Activated naive CD8-positive, alpha-beta T cell treated with anti-CD3 and anti-CD28 coated beads, Interleukin-2, amount 10 ng/mL, durations not matched to agents 7 days and 5 days (primary cell): ENCODE measurements at regions of chr6 and their contacts with region 1.

Region 1: GRCh38 chr6:110873981-110874879 is at the start of gene AMD1:
- DNase-seq: peak; percentile 91
- ATAC-seq: peak; percentile 75
- H3K4me3 Mint-ChIP-seq: peak within 1 kb of the TSS; percentile 93
- H3K27ac Mint-ChIP-seq: peak within 1 kb of the TSS; percentile 97
- H3K4me1 Mint-ChIP-seq: peaks cover 18% of the 10 kb centered on the region
- H3K27me3 Mint-ChIP-seq: no peaks in the 10 kb centered on the region
- total RNA-seq, gene AMD1: 60.0 to 61.2 TPM

Region 2: DNA sequence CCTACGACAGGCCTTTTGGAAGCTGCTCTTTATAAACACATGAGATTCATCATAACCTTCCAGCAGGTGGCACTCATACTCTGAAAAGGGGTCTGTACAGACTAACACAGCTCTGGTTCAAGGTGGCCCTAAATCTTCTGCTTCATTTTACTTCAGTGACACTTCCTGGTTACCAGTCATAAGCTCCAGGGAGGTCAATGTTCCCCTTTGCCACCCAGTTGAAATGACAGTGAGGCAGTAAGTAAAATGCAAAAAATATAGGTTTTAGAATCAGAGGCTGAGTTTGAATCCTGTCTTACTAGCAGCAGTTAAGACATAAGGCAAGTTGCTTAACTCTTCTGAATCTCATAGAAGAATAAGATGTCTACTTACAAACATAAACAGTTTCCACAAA is 191.8 kb before region 1 on chr6:
- POLR2A ChIA-PET with region 1: interaction called, 22 read pairs
- DNase-seq: no peak
- ATAC-seq: peak; percentile 99
- H3K4me3 Mint-ChIP-seq: no peak overlapping the region
- H3K27ac Mint-ChIP-seq: peak overlapping the region; percentile 27
- H3K4me1 Mint-ChIP-seq: peaks cover 9% of the 10 kb centered on the region
- H3K27me3 Mint-ChIP-seq: no peaks in the 10 kb centered on the region

Region 3: DNA sequence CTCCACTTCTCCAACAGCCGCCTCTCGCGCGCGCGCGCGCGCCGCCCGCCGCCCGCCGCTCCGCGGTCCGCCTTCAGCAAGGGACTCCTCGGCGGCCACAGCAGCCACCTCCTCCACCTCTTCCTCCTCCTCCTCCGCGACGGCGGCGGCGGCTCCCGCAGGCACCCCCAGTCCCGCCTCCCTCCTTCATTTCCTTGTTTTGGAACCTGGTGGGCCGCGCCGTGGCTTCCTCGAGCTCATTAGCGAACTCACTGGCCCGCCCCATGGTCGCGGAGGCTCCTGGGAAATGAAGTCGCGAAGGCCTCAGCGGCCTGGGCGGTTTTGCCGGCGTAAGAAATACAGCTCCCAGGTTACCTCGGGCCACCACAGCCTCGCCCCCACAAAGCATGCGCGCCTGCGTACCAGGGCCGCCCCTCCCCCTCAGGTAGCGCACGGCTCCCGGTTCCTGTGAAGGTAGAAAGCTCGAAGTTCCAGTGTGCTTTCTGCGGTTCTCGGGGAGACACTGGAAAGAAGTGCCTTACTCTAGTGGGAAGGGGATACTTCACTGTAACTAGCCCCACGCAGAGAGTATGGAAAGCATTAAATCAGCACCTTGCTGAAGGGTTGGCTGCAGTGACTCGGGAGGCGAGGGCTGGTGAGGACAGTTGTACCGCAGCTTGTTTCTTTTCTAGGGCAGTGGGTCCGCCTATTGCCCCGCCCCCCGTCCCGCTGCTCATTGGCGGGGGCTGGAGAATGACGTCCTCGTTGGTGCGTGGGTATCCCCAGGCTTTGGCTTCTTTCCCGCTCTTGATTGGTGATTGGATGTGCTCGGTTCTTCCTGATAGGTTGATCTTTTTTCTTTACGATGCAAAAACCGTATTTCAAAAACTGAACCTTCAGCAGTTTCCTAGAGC is 58.8 kb before region 1 on chr6 and contains the start of gene CDK19:
- POLR2A ChIA-PET with region 1: interaction called, 462 read pairs
- DNase-seq: peak; percentile 96
- ATAC-seq: peak; percentile 84
- H3K4me3 Mint-ChIP-seq: peak within 1 kb of the TSS; percentile 100
- H3K27ac Mint-ChIP-seq: peak within 1 kb of the TSS; percentile 100
- H3K4me1 Mint-ChIP-seq: peaks cover 32% of the 10 kb centered on the region
- H3K27me3 Mint-ChIP-seq: no peaks in the 10 kb centered on the region
- total RNA-seq, gene CDK19: 25.3 to 30.0 TPM

Region 4: GRCh38 chr6:110958329-110959192 is 84.3 kb after region 1 on chr6 and contains the start of gene GTF3C6:
- POLR2A ChIA-PET with region 1: interaction called, 71 read pairs
- DNase-seq: peak; percentile 93
- ATAC-seq: peak; percentile 99
- H3K4me3 Mint-ChIP-seq: peak within 1 kb of the TSS; percentile 96
- H3K27ac Mint-ChIP-seq: peak within 1 kb of the TSS; percentile 98
- H3K4me1 Mint-ChIP-seq: peaks cover 10% of the 10 kb centered on the region
- H3K27me3 Mint-ChIP-seq: peaks cover 4% of the 10 kb centered on the region
- total RNA-seq, gene GTF3C6: 60.9 to 65.4 TPM

Region 5: GRCh38 chr6:110990840-110991576 is 116.8 kb after region 1 on chr6:
- POLR2A ChIA-PET with region 1: no interaction called
- DNase-seq: no peak
- ATAC-seq: no peak
- H3K4me3 Mint-ChIP-seq: no peak overlapping the region
- H3K27ac Mint-ChIP-seq: no peak overlapping the region
- H3K4me1 Mint-ChIP-seq: peaks cover 4% of the 10 kb centered on the region
- H3K27me3 Mint-ChIP-seq: no peaks in the 10 kb centered on the region

Region 6: DNA sequence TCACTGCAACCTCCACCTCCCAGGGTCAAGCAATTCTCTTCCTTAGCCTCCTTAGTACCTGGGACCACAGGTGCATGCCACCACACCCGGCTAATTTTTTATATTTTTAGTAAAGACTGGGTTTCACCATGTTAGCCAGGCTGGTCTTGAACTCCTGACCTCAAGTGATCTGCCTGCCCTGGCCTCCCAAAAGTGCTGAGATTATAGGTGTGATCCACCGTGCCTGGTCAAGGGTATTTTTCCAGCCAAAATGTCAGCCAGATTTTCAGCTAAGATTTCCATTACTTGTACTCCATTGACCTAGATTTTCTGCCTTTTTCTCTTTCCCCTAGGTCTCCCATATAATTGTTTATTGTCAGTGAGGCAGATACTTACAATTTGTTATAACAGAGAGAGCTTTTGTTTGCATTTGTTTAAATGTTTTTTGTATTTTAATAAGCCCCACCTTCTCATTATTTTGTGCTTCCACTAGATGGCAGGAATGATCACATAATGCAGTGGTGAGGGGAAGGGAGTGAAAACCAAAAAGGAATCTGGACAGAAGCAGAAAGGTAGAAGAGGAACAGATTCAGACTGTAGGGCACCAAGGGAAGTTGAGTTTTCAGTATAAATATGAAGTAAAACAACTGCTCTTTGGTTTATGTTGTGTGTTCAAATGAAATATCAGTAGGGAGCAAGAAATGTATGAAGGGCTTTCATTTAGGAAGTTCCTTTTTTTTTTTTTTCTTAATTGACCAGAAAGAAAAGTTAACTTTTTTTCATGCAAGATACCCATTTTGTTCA is 137.3 kb after region 1 on chr6:
- POLR2A ChIA-PET with region 1: no interaction called
- DNase-seq: no peak
- ATAC-seq: peak; percentile 75
- H3K4me3 Mint-ChIP-seq: no peak overlapping the region
- H3K27ac Mint-ChIP-seq: no peak overlapping the region
- H3K4me1 Mint-ChIP-seq: peaks cover 8% of the 10 kb centered on the region
- H3K27me3 Mint-ChIP-seq: no peaks in the 10 kb centered on the region

Region 7: DNA sequence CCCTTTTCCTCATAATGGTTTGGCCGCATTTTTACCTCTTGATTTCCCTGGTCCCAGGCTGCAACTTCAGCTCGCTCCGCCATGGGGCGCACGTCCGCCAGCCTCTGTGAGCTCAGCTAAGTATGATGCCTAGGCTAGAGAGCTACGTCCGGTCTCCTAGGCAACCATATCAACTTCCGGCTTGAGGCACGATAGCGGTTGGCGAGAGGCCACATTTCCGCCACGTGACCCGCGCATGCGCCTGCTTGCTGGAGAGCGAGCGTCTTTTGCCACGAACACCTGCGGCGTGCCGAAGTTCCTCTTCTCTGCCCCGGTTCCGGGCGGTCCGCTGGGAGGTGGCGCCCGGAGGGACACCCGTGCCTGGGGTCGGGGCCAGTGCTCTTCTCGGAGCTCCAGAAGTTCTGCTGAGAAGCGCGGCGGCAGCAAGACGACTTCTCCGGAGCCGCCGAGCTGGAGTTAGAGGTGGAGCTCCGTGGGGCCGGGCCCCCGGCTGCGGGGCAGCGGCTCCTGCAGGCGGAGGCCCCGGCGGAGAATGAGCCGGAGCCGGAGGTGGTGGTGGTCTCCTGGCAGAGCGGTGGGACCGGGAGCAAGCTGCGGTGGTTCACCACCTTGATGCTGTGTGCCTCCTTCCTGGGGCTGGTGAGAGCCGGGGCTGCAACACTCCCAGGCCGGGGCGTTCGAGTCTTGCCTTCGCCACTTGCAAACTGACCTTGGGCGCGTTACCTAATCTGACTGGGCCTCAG is 385.0 kb after region 1 on chr6:
- POLR2A ChIA-PET with region 1: interaction called, 10 read pairs
- DNase-seq: peak; percentile 98
- ATAC-seq: peak; percentile 95
- H3K4me3 Mint-ChIP-seq: peak overlapping the region; percentile 62
- H3K27ac Mint-ChIP-seq: peak overlapping the region; percentile 88
- H3K4me1 Mint-ChIP-seq: peaks cover 28% of the 10 kb centered on the region
- H3K27me3 Mint-ChIP-seq: peaks cover 17% of the 10 kb centered on the region